ENCODE measurements at regions of chr9 and their contacts with region 1.

Region 1: GRCh38 chr9:84315278-84315877 is 25.2 kb downstream of the SLC28A3 start:
- DNase-seq: peak; percentile 68
- H3K4me3 Mint-ChIP-seq: no peak overlapping the region
- H3K27ac Mint-ChIP-seq: no peak overlapping the region
- H3K4me1 Mint-ChIP-seq: peaks cover 4% of the 10 kb centered on the region
- H3K27me3 Mint-ChIP-seq: no peaks in the 10 kb centered on the region

Region 2: GRCh38 chr9:83937911-83938323 is 377.5 kb before region 1 on chr9:
- CTCF ChIA-PET with region 1: interaction called, 23 read pairs
- DNase-seq: peak; percentile 34
- H3K4me3 Mint-ChIP-seq: no peak overlapping the region
- H3K27ac Mint-ChIP-seq: no peak overlapping the region
- H3K4me1 Mint-ChIP-seq: no peaks in the 10 kb centered on the region
- H3K27me3 Mint-ChIP-seq: no peaks in the 10 kb centered on the region

Region 3: DNA sequence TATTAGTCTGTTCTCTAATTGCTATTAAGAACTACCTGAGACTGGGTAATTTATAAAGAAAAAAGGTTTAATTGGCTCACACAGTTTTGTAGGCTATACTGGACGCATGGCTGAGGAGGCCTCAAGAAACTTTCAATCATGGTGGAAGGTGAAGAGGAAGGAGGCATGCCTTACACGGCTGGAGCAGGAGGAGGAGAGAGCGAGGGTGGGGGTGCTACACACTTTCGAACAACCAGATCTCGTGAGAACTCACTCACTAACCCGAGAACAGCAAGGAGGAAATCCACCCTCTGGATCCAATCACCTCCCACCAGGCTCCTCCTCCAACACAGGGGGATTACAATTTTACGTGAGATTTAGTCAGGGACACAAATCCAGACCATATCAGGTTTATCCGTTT is 244.8 kb before region 1 on chr9:
- CTCF ChIA-PET with region 1: no interaction called
- DNase-seq: no peak
- H3K4me3 Mint-ChIP-seq: no peak overlapping the region
- H3K27ac Mint-ChIP-seq: no peak overlapping the region
- H3K4me1 Mint-ChIP-seq: no peaks in the 10 kb centered on the region
- H3K27me3 Mint-ChIP-seq: no peaks in the 10 kb centered on the region

Region 4: GRCh38 chr9:84163052-84163650 is 152.2 kb before region 1 on chr9:
- CTCF ChIA-PET with region 1: no interaction called
- DNase-seq: no peak
- H3K4me3 Mint-ChIP-seq: no peak overlapping the region
- H3K27ac Mint-ChIP-seq: no peak overlapping the region
- H3K4me1 Mint-ChIP-seq: no peaks in the 10 kb centered on the region
- H3K27me3 Mint-ChIP-seq: peaks cover 21% of the 10 kb centered on the region

Region 5: GRCh38 chr9:84174486-84174885 is 140.9 kb before region 1 on chr9:
- CTCF ChIA-PET with region 1: interaction called, 19 read pairs
- DNase-seq: no peak
- H3K4me3 Mint-ChIP-seq: no peak overlapping the region
- H3K27ac Mint-ChIP-seq: no peak overlapping the region
- H3K4me1 Mint-ChIP-seq: peaks cover 8% of the 10 kb centered on the region
- H3K27me3 Mint-ChIP-seq: peaks cover 3% of the 10 kb centered on the region

Region 6: DNA sequence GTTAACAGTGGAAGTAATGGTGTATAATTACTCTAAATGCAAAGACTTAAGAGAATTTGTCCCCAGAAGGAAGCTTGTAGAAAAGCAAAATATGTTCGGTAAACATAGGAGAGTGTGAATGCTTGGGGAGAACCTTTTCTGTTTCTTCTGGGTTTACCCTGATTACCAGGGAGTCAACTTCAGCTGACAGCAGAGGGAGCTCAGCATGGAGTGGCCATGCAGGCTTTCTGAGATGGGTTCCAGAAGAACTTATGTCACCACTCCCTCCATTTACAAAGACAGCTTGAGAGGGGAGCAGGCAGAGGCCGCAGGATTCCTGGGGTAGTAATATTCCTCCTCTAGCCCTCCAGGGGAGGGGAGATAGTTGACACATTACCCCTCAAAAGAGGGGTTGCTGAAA is 70.5 kb before region 1 on chr9:
- CTCF ChIA-PET with region 1: no interaction called
- DNase-seq: no peak
- H3K4me3 Mint-ChIP-seq: no peak overlapping the region
- H3K27ac Mint-ChIP-seq: no peak overlapping the region
- H3K4me1 Mint-ChIP-seq: no peaks in the 10 kb centered on the region
- H3K27me3 Mint-ChIP-seq: peaks cover 8% of the 10 kb centered on the region

Region 7: DNA sequence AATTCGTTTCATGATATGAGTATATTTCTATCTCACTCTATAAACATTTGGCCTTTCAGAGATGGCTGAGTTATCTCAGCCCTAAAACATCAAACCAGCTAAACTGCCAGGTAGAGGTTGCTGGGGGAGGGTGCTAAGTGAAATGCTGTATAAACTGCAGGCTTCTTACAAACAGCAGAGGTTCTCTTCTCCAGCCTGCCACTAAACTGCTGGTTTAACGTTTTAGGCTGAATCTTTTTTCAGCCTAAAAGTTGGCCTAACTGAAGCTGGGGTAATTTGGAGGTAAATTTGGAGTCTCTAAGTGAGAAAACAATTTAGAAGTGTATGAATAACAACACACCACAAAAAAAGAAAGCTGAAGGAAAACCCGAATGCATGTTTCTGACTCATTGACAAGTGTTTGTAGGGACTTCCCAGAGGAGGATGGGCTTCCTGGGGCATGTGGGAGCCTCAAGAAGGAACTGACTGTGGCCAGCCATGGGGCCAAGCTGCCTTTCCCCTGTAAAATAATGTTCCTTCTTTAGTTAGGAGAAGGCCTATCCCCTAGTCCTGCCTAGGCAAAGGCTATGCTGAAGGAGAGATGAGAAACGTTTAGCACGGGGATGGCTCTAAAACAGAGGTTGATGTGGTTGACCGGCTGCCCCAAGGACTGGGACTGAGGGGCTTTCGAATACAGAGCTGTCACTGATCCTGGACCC is 19.1 kb before region 1 on chr9:
- CTCF ChIA-PET with region 1: interaction called, 45 read pairs
- DNase-seq: peak; percentile 39
- H3K4me3 Mint-ChIP-seq: no peak overlapping the region
- H3K27ac Mint-ChIP-seq: peak overlapping the region; percentile 90
- H3K4me1 Mint-ChIP-seq: peaks cover 61% of the 10 kb centered on the region
- H3K27me3 Mint-ChIP-seq: no peaks in the 10 kb centered on the region

Region 8: GRCh38 chr9:84304166-84304565 is 11.2 kb before region 1 on chr9:
- CTCF ChIA-PET with region 1: interaction called, 15 read pairs
- DNase-seq: no peak
- H3K4me3 Mint-ChIP-seq: no peak overlapping the region
- H3K27ac Mint-ChIP-seq: no peak overlapping the region
- H3K4me1 Mint-ChIP-seq: peaks cover 7% of the 10 kb centered on the region
- H3K27me3 Mint-ChIP-seq: no peaks in the 10 kb centered on the region

Region 9: GRCh38 chr9:84339962-84340361 is 24.6 kb after region 1 on chr9:
- CTCF ChIA-PET with region 1: no interaction called
- DNase-seq: no peak
- H3K4me3 Mint-ChIP-seq: no peak overlapping the region
- H3K27ac Mint-ChIP-seq: no peak overlapping the region
- H3K4me1 Mint-ChIP-seq: no peaks in the 10 kb centered on the region
- H3K27me3 Mint-ChIP-seq: peaks cover 4% of the 10 kb centered on the region

Measured in activated naive CD4-positive, alpha-beta T cell treated with anti-CD3 and anti-CD28 coated beads, Interleukin-2, amount 10 ng/mL, durations not matched to agents 7 days and 5 days (primary cell).